Posterior vena cava (tissue), 2 donors: ENCODE measurements at regions of chr4 and their contacts with region 1.

Region 1: GRCh38 chr4:89539797-89540711 is 232.5 kb upstream of the GPRIN3 start:
- DNase-seq: no peak

Region 2: GRCh38 chr4:87783781-87784180 is 1756.3 kb before region 1 on chr4:
- intact Hi-C with region 1: loop called in 1 of 2 experiments (anchors 10 kb)
- DNase-seq: no peak